ENCODE measurements at regions of chr16 and their contacts with region 1.

Region 1: DNA sequence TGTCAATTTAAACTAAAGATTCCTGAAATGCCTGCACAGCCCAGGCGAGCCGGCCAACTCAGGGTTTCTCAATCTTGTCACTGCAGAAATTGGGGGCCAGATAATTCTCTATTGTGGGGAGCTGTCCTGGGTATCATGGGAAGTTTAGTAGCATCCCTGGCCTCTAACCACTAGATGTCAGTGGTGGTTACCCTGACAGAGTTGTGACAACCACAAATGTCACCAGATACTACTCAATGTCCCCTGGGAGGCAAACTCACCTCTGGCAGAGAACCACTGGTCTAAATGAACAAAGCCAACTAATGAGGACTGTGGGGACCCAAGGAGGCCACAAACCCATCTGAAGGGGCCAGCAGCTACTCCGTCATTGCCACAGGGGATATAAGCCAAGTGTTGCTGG is 90.9 kb downstream of the MYH11 start:
- H3K4me3 ChIP-seq: no peak overlapping the region
- H3K27ac ChIP-seq: no peak overlapping the region
- H3K4me1 ChIP-seq: no peaks in the 10 kb centered on the region
- CTCF ChIP-seq: peak; percentile 51; the same call in 1 of the 2 replicates

Region 2: DNA sequence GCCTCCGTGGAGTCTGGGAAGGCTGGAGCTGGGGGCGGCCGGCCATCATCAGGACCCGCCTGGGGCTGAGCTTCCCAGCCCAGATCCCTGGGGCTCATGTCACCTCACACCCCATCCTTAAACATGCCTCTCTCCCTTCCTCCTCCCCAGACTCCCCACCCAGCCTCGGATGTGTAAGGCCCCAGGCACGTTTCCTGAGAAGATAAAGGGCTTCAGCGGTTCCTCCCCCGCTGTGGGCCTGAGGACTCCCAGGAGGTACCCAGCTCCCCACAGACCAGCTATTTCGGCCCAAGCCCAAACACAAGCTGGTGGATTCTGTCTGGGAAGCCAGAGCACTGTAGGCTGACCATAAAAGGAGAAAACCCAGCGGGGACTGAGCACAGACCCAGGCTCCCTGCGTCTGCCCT is 41.7 kb after region 1 on chr16:
- CTCF ChIA-PET with region 1: no interaction called
- POLR2A ChIA-PET with region 1: no interaction called
- H3K4me3 ChIP-seq: no peak overlapping the region
- H3K27ac ChIP-seq: no peak overlapping the region
- H3K4me1 ChIP-seq: no peaks in the 10 kb centered on the region
- CTCF ChIP-seq: no peak

Region 3: DNA sequence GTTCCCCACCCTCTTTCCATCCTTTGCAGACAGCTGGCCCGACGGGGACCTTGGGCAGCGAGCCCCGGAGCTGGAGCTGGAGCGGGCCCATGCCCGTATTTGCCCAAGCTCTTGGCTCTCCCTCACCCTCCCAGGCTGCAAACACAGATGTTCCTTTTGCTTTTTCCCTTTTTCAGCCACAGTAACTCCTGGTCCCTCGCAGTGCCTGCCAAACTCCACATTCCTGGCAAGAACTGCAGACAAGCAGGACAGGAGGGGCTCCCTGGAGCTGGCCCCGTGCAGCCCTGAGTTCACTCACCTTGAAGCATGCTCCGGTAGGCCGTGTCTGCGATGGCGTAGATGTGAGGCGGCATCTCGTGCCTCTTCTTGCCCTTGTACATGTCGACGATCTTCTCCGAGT is 57.1 kb after region 1 on chr16:
- CTCF ChIA-PET with region 1: interaction called, 33 read pairs
- POLR2A ChIA-PET with region 1: no interaction called
- H3K4me3 ChIP-seq: no peak overlapping the region
- H3K27ac ChIP-seq: no peak overlapping the region
- H3K4me1 ChIP-seq: no peaks in the 10 kb centered on the region
- CTCF ChIP-seq: no peak

Region 4: DNA sequence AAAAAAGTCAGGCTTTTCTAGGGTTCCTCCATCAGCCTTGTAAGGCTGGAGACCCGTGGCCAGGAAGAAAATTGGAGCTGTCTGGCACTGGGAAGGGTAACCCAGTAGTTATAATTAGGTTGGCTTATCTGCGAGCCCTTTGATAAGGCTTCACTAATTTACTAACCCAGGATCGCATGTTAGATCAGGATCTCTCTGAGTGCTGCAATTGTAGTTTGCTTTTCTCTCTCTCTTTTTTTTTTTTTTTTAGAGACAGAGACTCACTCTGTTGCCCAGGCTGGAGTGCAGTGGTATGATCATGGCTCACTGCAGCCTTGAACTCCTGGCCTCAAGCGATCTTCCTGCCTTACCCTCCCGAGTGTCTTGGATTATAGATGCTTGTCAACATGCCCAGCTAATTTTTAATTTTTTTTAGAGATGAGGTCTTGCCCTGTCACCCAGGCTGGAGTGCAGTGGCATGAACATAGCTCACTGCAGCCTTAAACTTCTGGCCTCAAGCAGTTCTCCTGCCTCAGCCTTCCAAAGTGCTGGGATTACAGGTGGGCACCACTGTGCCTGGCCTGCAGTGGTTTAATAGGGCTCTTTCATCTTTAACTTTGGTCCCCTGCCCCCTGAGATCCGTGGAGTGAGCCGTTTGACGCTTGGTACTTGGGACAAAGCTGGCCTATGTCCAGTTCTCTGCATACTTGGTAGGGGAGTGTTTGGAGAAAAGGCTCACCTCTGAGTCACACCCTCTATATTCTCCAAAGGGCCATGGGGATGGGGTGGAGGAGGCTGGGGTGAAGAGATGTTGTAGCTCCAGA is 200.7 kb after region 1 on chr16:
- CTCF ChIA-PET with region 1: no interaction called
- POLR2A ChIA-PET with region 1: no interaction called
- H3K4me3 ChIP-seq: no peak overlapping the region
- H3K27ac ChIP-seq: no peak overlapping the region
- H3K4me1 ChIP-seq: peaks cover 3% of the 10 kb centered on the region
- CTCF ChIP-seq: no peak